ENCODE measurements at regions of chr7 and their contacts with region 1.

Region 1: GRCh38 chr7:87687653-87688254 is 59.6 kb downstream of the RUNDC3B start:
- DNase-seq: no peak
- ATAC-seq: peak in 7 of 8 donors; percentile 34 to 87 (median 65)
- H3K4me3 ChIP-seq: no peak overlapping the region
- H3K27ac ChIP-seq: no peak overlapping the region
- H3K4me1 ChIP-seq: no peaks in the 10 kb centered on the region
- H3K27me3 ChIP-seq: no peaks in the 10 kb centered on the region
- CTCF ChIP-seq: no peak

Region 2: DNA sequence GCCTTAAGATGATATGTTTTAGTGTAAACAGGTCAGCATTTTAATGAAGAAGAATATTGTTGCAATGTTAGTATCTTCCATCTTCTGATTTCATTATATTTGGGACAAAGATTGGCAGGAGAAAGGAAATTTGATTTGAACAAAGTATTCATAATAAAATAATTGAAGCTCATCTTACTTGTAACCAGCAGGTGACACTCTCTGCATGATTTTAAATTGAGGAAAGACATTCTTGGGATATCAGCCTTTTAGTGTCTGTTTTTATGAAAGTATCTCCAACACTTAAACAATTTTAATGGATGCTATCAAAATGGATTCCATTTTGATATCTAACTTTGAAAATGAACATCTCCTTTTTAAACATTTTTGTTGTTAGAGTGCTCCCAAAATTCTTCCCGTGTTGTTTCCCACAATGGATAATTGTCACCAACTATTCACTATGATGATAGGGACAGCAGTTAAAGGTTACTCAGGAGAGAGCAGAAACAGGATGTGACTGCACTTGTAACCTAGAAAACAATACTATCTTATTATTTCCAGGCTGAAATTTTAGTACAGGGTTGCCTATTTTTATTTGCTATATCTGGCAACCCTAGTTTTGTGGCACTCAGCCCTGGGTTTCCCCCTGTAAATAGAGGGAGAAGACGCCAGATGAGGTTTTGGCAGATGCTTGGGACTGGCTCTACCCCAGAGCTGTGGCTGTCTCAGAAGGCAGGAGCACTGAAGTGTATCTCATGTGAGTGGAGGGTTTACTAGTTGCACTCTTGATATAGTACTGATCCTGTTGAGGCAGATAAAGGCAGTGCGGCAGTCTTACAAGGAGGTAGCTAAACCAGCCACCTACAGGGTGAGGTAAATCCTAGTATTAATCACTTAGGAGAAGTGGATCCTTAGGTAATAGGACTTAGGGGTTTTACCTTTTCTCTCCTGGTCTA is 181.2 kb before region 1 on chr7:
- intact Hi-C with region 1: no loop called
- DNase-seq: no peak
- ATAC-seq: peak in 1 of 8 donors; percentile 22
- H3K4me3 ChIP-seq: no peak overlapping the region
- H3K27ac ChIP-seq: no peak overlapping the region
- H3K4me1 ChIP-seq: peaks cover 0 to 9% (median 0%) of the 10 kb centered on the region in 9 donors
- H3K27me3 ChIP-seq: no peaks in the 10 kb centered on the region
- CTCF ChIP-seq: peak in 8 of 9 donors; percentile 23 to 67 (median 52)

Region 3: GRCh38 chr7:87635921-87636320 is 51.8 kb before region 1 on chr7:
- intact Hi-C with region 1: loop called in 1 of 10 experiments (anchors 5 kb)
- DNase-seq: no peak
- ATAC-seq: no peak
- H3K4me3 ChIP-seq: no peak overlapping the region
- H3K27ac ChIP-seq: no peak overlapping the region
- H3K4me1 ChIP-seq: no peaks in the 10 kb centered on the region
- H3K27me3 ChIP-seq: no peaks in the 10 kb centered on the region
- CTCF ChIP-seq: no peak

Region 4: DNA sequence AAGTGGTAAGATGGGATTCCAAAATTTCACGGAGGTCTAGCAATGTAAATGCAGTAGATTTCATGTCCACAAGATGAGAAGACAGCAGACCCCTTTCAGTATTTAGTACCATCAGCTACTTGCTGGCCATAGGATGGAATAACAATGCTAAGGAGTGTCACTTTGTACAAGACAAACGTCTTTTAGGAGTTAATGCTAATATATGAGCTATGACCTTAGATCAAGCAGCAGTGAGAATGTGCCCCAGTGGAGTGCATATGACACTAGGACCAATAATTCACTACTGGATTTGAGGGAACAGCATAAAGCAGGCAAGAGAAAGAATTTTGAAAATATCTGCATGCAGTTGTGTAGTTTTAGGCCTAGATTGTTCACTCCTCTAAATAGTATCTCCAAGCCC is 889.0 kb after region 1 on chr7:
- intact Hi-C with region 1: no loop called
- DNase-seq: no peak
- ATAC-seq: no peak
- H3K4me3 ChIP-seq: no peak overlapping the region
- H3K27ac ChIP-seq: no peak overlapping the region
- H3K4me1 ChIP-seq: no peaks in the 10 kb centered on the region
- H3K27me3 ChIP-seq: no peaks in the 10 kb centered on the region
- CTCF ChIP-seq: no peak